Esophagus squamous epithelium (tissue), 5 donors: ENCODE measurements at regions of chr5 and their contacts with region 1.

Region 1: GRCh38 chr5:13987843-13988464 is 43.5 kb upstream of the DNAH5 start:
- DNase-seq: no peak
- H3K4me3 ChIP-seq: no peak overlapping the region
- H3K27ac ChIP-seq: no peak overlapping the region
- H3K4me1 ChIP-seq: no peaks in the 10 kb centered on the region
- H3K27me3 ChIP-seq: peaks cover 0 to 20% (median 0%) of the 10 kb centered on the region in 4 donors
- CTCF ChIP-seq: peak; percentile 60 to 88 (median 84)
- POLR2A ChIP-seq: no peak

Region 2: GRCh38 chr5:13946115-13946514 is 41.8 kb before region 1 on chr5:
- intact Hi-C with region 1: no loop called
- DNase-seq: no peak
- H3K4me3 ChIP-seq: no peak overlapping the region
- H3K27ac ChIP-seq: no peak overlapping the region
- H3K4me1 ChIP-seq: peaks cover 0 to 9% (median 0%) of the 10 kb centered on the region in 3 donors
- H3K27me3 ChIP-seq: peaks cover 0 to 13% (median 0%) of the 10 kb centered on the region in 4 donors
- CTCF ChIP-seq: no peak
- POLR2A ChIP-seq: no peak

Region 3: GRCh38 chr5:14270209-14270702 is 282.3 kb after region 1 on chr5:
- intact Hi-C with region 1: loop called (anchors 10 kb)
- DNase-seq: no peak
- H3K4me3 ChIP-seq: no peak overlapping the region
- H3K27ac ChIP-seq: peak overlapping the region in 3 of 4 donors; percentile 29 to 64 (median 63)
- H3K4me1 ChIP-seq: peaks cover 0 to 48% (median 25%) of the 10 kb centered on the region in 3 donors
- H3K27me3 ChIP-seq: no peaks in the 10 kb centered on the region
- CTCF ChIP-seq: peak; percentile 50 to 82 (median 72)
- POLR2A ChIP-seq: no peak